ENCODE measurements at regions of chr11 and their contacts with region 1.

Region 1: GRCh38 chr11:133586903-133587517 is 54.7 kb upstream of the OPCML start:
- DNase-seq: no peak
- H3K4me3 ChIP-seq: no peak overlapping the region
- H3K27ac ChIP-seq: no peak overlapping the region
- H3K4me1 ChIP-seq: no peaks in the 10 kb centered on the region
- H3K27me3 ChIP-seq: no peaks in the 10 kb centered on the region
- CTCF ChIP-seq: no peak
- EP300 ChIP-seq: no peak
- POLR2A ChIP-seq: no peak

Region 2: DNA sequence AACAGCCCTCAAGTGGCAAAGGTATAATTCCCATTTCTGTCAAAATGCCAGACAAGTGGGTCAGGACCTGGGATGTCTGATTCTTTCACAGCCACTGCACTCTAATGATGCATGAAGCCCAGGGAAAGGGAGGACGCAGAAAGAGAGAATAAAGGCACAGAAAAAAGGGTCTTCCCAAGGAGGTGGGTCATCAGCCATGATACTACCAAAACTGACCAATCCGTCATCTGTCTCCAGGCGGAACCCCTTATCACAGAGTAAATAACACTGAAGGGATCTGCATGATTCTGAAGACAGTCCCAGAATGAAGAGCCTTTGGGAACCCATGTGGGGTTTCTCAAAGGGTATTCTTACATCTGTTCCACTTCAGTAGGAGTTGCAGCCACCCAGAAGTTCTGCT is 19.1 kb after region 1 on chr11:
- intact Hi-C with region 1: loop called in 1 of 4 experiments (anchors 1 kb)
- DNase-seq: no peak
- H3K4me3 ChIP-seq: no peak overlapping the region
- H3K27ac ChIP-seq: no peak overlapping the region
- H3K4me1 ChIP-seq: no peaks in the 10 kb centered on the region
- H3K27me3 ChIP-seq: no peaks in the 10 kb centered on the region
- CTCF ChIP-seq: no peak
- EP300 ChIP-seq: no peak
- POLR2A ChIP-seq: no peak